ENCODE measurements at regions of chr19 and their contacts with region 1.

Region 1: DNA sequence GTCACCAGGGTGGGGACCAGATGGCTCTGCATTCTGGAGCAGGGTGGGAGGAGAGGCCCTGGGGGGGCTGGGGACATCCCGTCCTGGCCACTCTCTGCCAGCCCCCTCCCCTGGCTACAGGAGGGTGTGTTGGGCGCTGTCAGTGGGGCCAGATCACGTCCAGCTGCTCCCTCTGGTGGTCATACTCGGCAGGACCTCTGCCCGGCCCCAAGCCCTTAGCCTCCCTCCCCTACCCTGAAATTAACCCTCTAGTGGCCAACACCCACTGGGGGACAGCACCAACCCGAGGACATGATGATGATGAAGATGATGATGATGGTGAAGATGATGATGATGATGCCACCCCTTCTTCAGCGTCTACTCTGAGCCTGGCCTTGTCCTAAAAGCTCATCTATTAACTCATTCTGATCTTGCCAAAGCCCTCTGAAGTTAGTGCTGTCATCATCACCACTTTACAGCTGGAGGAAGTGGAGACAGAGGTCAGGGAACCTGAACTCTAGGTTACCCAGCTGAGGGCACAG is 590 bp upstream of the LGI4 start:
- DNase-seq: peak in 1 of 2 experiments; percentile 96
- H3K4me3 ChIP-seq: peak overlapping the region in 1 of 4 experiments; percentile 44; a peak in 2 of 8 replicates
- H3K27ac ChIP-seq: no peak overlapping the region
- H3K4me1 ChIP-seq: peaks cover 3 to 19% (median 13%) of the 10 kb centered on the region in 4 experiments; a peak in 6 of 7 replicates
- H3K27me3 ChIP-seq: peaks cover 0 to 3% (median under 1%) of the 10 kb centered on the region in 4 experiments; a peak in 3 of 7 replicates
- CTCF ChIP-seq: peak; percentile 91 to 94 (median 94)
- EP300 ChIP-seq: no peak
- POLR2A ChIP-seq: no peak
- RAD21 ChIP-seq: peak; percentile 72 to 83

Region 2: GRCh38 chr19:35055715-35056179 is 79.7 kb before region 1 on chr19:
- CTCF ChIA-PET with region 1: interaction called, 41 read pairs
- POLR2A ChIA-PET with region 1: interaction called, 4 read pairs
- DNase-seq: peak; percentile 75
- H3K4me3 ChIP-seq: 0 out of 8 replicates have a peak overlapping the region, but pooled peaks of 1 of the 4 experiments have one; percentile 26
- H3K27ac ChIP-seq: no peak overlapping the region
- H3K4me1 ChIP-seq: peaks cover 0 to 11% (median 2%) of the 10 kb centered on the region in 4 experiments; a peak in 5 of 7 replicates
- H3K27me3 ChIP-seq: no peaks in the 10 kb centered on the region
- CTCF ChIP-seq: peak; percentile 83 to 91 (median 89)
- EP300 ChIP-seq: no peak
- POLR2A ChIP-seq: no peak
- RAD21 ChIP-seq: peak; percentile 67 to 72

Region 3: GRCh38 chr19:35090506-35091237 is 44.8 kb before region 1 on chr19:
- CTCF ChIA-PET with region 1: interaction called, 30 read pairs
- POLR2A ChIA-PET with region 1: no interaction called
- DNase-seq: peak in 1 of 2 experiments; percentile 80
- H3K4me3 ChIP-seq: peak overlapping the region; percentile 13 to 45 (median 36); a peak in 7 of 8 replicates
- H3K27ac ChIP-seq: no peak overlapping the region
- H3K4me1 ChIP-seq: peaks cover 3 to 14% (median 6%) of the 10 kb centered on the region in 4 experiments; a peak in 6 of 7 replicates
- H3K27me3 ChIP-seq: no peaks in the 10 kb centered on the region
- CTCF ChIP-seq: peak; percentile 38 to 49 (median 40)
- EP300 ChIP-seq: no peak
- POLR2A ChIP-seq: 0 out of 3 replicates have a peak, but pooled peaks of 1 of the 2 experiments have one; percentile 19
- RAD21 ChIP-seq: peak; percentile 52 to 59

Region 4: GRCh38 chr19:35124098-35125060 is 11.1 kb before region 1 on chr19:
- CTCF ChIA-PET with region 1: interaction called, 154 read pairs
- POLR2A ChIA-PET with region 1: interaction called, 9 read pairs
- DNase-seq: no peak
- H3K4me3 ChIP-seq: peak overlapping the region in 1 of 4 experiments; percentile 16; a peak in 1 of 8 replicates
- H3K27ac ChIP-seq: no peak overlapping the region; the same call in 1 of the 2 replicates
- H3K4me1 ChIP-seq: peaks cover 2 to 11% (median 6%) of the 10 kb centered on the region in 4 experiments; a peak in 5 of 7 replicates
- H3K27me3 ChIP-seq: no peaks in the 10 kb centered on the region; a peak in 1 of 7 replicates
- CTCF ChIP-seq: no peak
- EP300 ChIP-seq: no peak
- POLR2A ChIP-seq: no peak
- RAD21 ChIP-seq: no peak

Region 5: DNA sequence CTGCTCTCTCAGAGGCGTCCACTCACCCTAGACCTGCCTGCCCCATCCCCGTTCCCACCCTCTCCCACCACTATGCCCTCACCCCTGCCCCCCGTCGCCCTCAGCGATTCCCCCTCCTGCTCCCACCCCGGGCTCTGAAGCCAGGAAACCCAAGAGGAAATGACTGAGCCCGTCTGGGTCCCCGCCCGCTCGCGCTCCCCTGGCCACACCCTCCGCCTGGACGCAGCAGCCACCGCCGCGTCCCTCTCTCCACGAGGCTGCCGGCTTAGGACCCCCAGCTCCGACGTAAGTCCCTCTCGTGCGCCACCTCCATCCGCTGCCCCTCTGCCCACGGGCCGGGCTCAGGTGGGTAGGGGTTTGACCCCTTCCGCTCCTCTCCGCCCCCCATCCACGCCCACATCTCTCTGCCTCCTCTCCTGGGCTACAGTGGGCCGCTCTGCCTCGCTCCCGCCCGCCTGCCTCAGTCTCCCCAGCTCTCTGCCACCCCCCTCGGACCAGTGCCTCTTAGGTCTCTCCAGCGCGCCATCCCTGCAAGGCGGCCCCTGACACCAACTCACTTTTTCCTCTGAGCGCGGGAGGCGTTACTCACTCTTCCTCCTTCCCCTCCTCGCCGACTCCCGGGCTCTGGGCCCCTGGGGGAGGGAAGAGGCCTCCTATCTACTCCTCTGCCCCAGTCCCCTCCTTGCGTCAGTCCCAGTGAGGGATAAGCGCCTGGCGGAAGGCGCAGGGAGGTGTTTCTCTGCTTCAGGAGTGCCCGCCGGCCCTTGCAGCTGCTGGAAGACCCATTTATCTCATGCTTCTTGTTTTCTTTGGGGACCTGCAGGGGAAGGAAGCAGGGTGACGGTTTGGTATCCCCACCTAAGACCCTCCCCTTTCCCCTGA is 19.3 kb after region 1 on chr19 and contains the start of gene FXYD5:
- CTCF ChIA-PET with region 1: interaction called, 17 read pairs
- POLR2A ChIA-PET with region 1: interaction called, 5 read pairs
- DNase-seq: peak in 1 of 2 experiments; percentile 72
- H3K4me3 ChIP-seq: peak within 1 kb of the TSS; percentile 68 to 80 (median 74)
- H3K27ac ChIP-seq: peak within 1 kb of the TSS; percentile 21; the same call in 1 of the 2 replicates
- H3K4me1 ChIP-seq: peaks cover 4 to 28% (median 19%) of the 10 kb centered on the region in 4 experiments
- H3K27me3 ChIP-seq: peaks cover 0 to 5% (median 3%) of the 10 kb centered on the region in 4 experiments; a peak in 3 of 7 replicates
- CTCF ChIP-seq: peak in 1 of 3 experiments; percentile 3; a peak in 1 of 4 replicates
- EP300 ChIP-seq: no peak
- POLR2A ChIP-seq: no peak
- RAD21 ChIP-seq: no peak
- total RNA-seq, gene FXYD5: 99.0 and 104 TPM in 2 replicates

Region 6: DNA sequence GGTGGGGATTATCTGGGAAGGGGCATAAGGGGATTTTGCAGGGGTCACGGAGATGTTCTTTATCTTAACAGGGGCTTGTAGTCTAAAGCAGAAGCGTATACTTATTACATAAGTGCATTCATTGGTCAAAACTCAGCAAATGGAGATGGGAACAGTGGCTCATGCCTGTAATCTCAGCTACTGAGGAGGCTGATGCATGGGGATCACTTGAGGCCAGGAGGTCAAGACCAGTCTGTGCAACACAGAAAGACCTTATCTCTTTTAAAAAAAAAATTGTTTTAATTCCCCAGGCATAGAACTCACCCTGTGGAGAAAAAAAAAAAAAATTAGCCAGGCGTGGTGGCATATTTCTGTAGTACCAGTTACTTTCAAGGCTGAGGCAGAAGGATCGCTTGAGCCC is 74.2 kb after region 1 on chr19:
- CTCF ChIA-PET with region 1: no interaction called
- POLR2A ChIA-PET with region 1: no interaction called
- DNase-seq: no peak
- H3K4me3 ChIP-seq: no peak overlapping the region
- H3K27ac ChIP-seq: no peak overlapping the region
- H3K4me1 ChIP-seq: peaks cover 0 to 9% (median 4%) of the 10 kb centered on the region in 4 experiments; a peak in 4 of 7 replicates
- H3K27me3 ChIP-seq: no peaks in the 10 kb centered on the region
- CTCF ChIP-seq: no peak
- EP300 ChIP-seq: no peak
- POLR2A ChIP-seq: no peak
- RAD21 ChIP-seq: no peak

Region 7: DNA sequence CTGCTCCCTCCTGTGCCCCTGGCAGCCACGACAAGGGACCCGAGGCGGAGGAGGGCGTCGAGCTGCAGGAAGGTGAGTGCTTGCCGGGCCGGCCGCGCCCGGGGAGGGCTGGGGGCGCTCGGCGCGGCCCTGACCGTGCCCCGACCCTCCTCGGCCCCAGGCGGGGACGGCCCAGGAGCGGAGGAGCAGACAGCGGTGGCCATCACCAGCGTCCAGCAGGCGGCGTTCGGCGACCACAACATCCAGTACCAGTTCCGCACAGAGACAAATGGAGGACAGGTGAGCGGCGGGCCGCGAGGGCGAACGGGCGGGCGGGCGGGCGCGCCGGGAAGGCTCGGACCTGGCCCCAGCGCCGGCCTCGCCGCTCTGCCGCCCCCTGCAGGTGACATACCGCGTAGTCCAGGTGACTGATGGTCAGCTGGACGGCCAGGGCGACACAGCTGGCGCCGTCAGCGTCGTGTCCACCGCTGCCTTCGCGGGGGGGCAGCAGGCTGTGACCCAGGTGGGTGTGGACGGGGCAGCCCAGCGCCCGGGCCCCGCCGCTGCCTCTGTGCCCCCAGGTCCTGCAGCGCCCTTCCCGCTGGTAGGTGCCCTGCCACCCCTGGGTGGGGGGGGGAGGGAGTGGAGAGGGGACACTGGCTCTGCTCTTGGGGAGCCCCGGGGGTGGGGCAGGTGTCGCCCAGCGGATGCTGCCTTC is 134.1 kb after region 1 on chr19:
- CTCF ChIA-PET with region 1: no interaction called
- POLR2A ChIA-PET with region 1: no interaction called
- DNase-seq: peak in 1 of 2 experiments; percentile 97
- H3K4me3 ChIP-seq: peak overlapping the region; percentile 32 to 68 (median 59)
- H3K27ac ChIP-seq: peak overlapping the region; percentile 93
- H3K4me1 ChIP-seq: peaks cover 0 to 14% (median 8%) of the 10 kb centered on the region in 4 experiments; a peak in 5 of 7 replicates
- H3K27me3 ChIP-seq: no peaks in the 10 kb centered on the region
- CTCF ChIP-seq: peak; percentile 46 to 72 (median 66)
- EP300 ChIP-seq: no peak
- POLR2A ChIP-seq: peak in 1 of 2 experiments; percentile 50; a peak in 2 of 3 replicates
- RAD21 ChIP-seq: peak; percentile 62 to 63

Measured in H1 (cell line).